AG04449 (cell line): ENCODE measurements at regions of chr15 and their contacts with region 1.

Region 1: DNA sequence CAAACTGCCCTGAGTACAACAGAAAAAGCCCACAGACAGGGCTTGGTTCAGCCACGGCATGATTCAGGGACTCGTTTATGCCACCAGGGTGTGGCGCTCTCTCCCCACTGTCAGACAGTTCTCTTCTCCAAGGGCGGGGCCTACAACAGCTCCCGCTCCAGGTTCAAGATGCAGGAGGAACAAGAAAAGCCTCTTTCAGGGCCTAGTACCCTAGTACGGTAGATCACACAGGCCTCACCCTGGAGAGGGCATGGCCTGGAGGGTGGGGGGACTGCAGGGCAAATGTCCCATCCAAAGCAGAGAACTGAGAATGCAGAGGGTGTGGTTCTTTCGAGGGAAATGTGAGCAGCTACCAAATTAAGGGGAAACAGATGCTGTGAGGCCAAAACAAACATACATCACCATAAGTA is 12.0 kb downstream of the MESD start:
- DNase-seq: no peak
- H3K4me3 ChIP-seq: no peak overlapping the region
- CTCF ChIP-seq: peak; percentile 62

Region 2: GRCh38 chr15:80989518-80990478 is 12.2 kb after region 1 on chr15 and contains the start of gene MESD:
- CTCF ChIA-PET with region 1: interaction called, 10 read pairs
- POLR2A ChIA-PET with region 1: no interaction called
- DNase-seq: peak; percentile 46
- H3K4me3 ChIP-seq: peak within 1 kb of the TSS; percentile 90
- CTCF ChIP-seq: no peak

Region 3: GRCh38 chr15:81054236-81054635 is 76.6 kb after region 1 on chr15:
- CTCF ChIA-PET with region 1: no interaction called
- POLR2A ChIA-PET with region 1: no interaction called
- DNase-seq: peak; percentile 41
- H3K4me3 ChIP-seq: no peak overlapping the region
- CTCF ChIP-seq: no peak

Region 4: GRCh38 chr15:81080996-81081395 is 103.4 kb after region 1 on chr15:
- CTCF ChIA-PET with region 1: no interaction called
- POLR2A ChIA-PET with region 1: no interaction called
- DNase-seq: no peak
- H3K4me3 ChIP-seq: no peak overlapping the region
- CTCF ChIP-seq: no peak

Region 5: GRCh38 chr15:81106560-81106959 is 128.9 kb after region 1 on chr15:
- CTCF ChIA-PET with region 1: interaction called, 38 read pairs
- POLR2A ChIA-PET with region 1: no interaction called
- DNase-seq: peak; percentile 42
- H3K4me3 ChIP-seq: no peak overlapping the region
- CTCF ChIP-seq: peak; percentile 65

Region 6: GRCh38 chr15:81256916-81257315 is 279.3 kb after region 1 on chr15:
- CTCF ChIA-PET with region 1: interaction called, 15 read pairs
- POLR2A ChIA-PET with region 1: no interaction called
- DNase-seq: no peak
- H3K4me3 ChIP-seq: no peak overlapping the region
- CTCF ChIP-seq: peak; percentile 29